B cell (primary cell): ENCODE measurements at regions of chr5 and their contacts with region 1.

Region 1: GRCh38 chr5:132490486-132491367 is at the start of gene IRF1:
- DNase-seq: peak; percentile 98
- ATAC-seq: peak; percentile 70
- H3K4me3 ChIP-seq: peak within 1 kb of the TSS; percentile 81 to 99 (median 89)
- H3K4me3 Mint-ChIP-seq: peak within 1 kb of the TSS; percentile 96
- H3K27ac ChIP-seq: peak within 1 kb of the TSS; percentile 99
- H3K27ac Mint-ChIP-seq: peak within 1 kb of the TSS; percentile 96
- H3K4me1 ChIP-seq: peaks cover 74 to 81% of the 10 kb centered on the region in 2 donors
- H3K4me1 Mint-ChIP-seq: peaks cover 76% of the 10 kb centered on the region
- H3K27me3 ChIP-seq: no peaks in the 10 kb centered on the region
- H3K27me3 Mint-ChIP-seq: no peaks in the 10 kb centered on the region
- CTCF ChIP-seq: no peak
- total RNA-seq, gene IRF1: 304 and 306 TPM in 2 replicates

Region 2: DNA sequence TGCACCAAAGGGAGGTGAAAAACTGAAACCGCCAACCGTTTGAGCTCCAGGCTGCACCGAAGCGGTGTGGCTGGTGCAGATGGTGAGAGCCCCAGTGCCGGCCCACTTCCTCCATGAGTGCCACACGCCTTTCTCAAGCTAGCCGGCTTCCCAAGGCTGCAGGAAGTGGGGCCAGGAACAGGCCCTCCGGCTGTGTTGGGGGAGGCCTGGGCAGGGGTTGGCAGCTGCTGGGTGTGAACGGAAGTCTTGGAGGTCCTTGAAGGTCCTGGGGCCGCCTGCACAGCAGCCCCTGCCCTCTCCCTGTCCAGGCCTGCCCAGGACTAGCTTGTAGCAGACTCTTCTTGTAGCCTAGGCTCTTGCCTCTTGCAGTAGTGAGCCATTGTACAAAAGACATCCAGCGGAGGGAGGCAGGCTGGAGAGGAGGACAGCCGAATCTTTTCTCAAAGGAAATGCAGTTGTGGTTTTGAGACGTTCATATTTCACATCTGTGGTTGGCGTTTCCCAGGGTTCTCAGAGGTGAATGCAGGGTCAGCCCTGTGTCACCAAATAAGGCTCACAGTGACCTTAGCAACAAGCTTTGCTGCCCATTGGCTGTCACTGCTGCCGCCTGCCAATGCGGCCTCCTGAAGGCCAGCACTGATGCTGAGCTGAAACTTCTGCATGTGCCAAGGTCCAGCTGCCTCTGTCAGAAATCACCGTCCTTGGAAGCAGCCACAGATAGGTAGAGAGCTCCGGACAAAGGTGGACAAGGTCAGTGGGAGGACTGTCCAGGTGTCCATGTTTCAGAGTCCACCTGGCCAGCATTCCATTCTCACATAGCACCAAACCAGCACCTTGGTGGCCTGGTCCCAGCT is 24.1 kb before region 1 on chr5:
- CTCF ChIA-PET with region 1: interaction called, 31 read pairs
- POLR2A ChIA-PET with region 1: interaction called, 51 read pairs
- intact Hi-C with region 1: no loop called
- DNase-seq: peak; percentile 72
- ATAC-seq: peak; percentile 61
- H3K4me3 ChIP-seq: peak overlapping the region; percentile 10 to 53 (median 35)
- H3K4me3 Mint-ChIP-seq: peak overlapping the region; percentile 62
- H3K27ac ChIP-seq: peak overlapping the region; percentile 70 to 72
- H3K27ac Mint-ChIP-seq: peak overlapping the region; percentile 77
- H3K4me1 ChIP-seq: peaks cover 71 to 83% of the 10 kb centered on the region in 2 donors
- H3K4me1 Mint-ChIP-seq: peaks cover 85% of the 10 kb centered on the region
- H3K27me3 ChIP-seq: no peaks in the 10 kb centered on the region
- H3K27me3 Mint-ChIP-seq: no peaks in the 10 kb centered on the region
- CTCF ChIP-seq: no peak

Region 3: DNA sequence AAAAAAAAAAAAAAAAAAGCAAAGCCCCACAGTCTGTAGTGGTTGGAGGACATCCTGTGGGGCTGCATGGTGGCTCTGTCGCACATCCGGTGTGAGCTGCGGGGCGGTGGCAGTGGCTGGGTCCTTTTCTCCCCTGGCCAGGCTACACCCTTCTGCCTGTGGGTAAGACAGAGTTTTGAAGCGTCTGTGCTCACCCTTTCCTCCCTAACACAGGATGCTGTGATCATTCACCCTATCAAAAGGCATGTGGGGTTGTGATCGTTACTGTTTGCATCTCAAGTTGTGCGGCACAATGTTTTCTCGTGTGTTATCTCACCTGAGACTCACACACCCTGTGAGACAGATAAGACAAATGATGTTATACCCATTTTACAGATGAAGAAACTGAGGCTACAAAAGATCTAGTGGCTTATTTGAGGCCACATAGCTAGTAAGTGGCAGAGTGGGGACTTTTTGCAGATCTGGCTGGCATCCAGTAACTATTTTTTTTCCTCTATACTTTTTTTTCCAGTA is 17.7 kb before region 1 on chr5:
- CTCF ChIA-PET with region 1: interaction called, 60 read pairs
- POLR2A ChIA-PET with region 1: interaction called, 101 read pairs
- intact Hi-C with region 1: loop called (anchors 1 kb)
- DNase-seq: peak; percentile 88
- ATAC-seq: peak; percentile 86
- H3K4me3 ChIP-seq: no peak overlapping the region
- H3K4me3 Mint-ChIP-seq: peak overlapping the region; percentile 83
- H3K27ac ChIP-seq: peak overlapping the region; percentile 81 to 93
- H3K27ac Mint-ChIP-seq: peak overlapping the region; percentile 99
- H3K4me1 ChIP-seq: peaks cover 46 to 75% of the 10 kb centered on the region in 2 donors
- H3K4me1 Mint-ChIP-seq: peaks cover 78% of the 10 kb centered on the region
- H3K27me3 ChIP-seq: no peaks in the 10 kb centered on the region
- H3K27me3 Mint-ChIP-seq: no peaks in the 10 kb centered on the region
- CTCF ChIP-seq: no peak

Region 4: DNA sequence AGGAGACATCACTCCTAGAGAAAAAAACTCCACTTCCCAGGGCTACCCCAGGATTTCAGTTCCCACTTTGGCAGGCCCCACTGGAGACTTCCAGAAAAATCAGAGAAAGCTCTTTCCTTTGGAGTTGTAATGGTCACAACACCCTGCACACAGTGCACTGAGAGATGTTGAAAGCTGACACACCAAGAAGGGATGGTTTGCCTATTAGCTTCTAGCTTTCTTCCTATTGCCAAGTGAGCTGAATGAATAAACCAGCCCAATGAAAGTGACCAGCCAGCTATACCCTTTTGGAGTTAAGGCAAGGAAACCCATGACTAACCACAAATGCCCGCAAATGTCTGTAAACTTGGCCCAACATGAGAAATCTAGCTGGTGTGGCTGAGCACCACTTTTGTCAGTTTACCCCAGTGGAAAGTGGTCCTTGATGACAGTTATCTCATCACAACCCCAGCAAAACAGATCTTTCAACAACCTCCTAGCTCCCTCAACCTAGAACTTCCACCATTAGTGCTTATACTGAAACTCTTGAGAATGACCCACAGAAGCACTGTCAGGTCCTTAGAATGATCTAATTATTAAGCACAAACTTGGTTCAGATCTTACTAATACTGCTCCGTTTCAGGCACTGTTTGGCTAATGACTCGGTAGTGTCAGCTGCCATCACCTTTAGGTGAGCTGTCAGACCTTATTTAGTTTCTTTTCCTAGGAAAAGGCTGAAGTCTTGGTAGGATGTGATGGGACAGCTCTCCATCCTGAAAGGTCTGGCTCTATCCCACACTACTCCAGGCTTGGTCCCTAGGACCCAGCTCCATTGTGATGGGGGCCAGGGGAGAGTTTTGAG is 11.4 kb before region 1 on chr5:
- CTCF ChIA-PET with region 1: interaction called, 60 read pairs
- POLR2A ChIA-PET with region 1: interaction called, 101 read pairs
- intact Hi-C with region 1: loop called (anchors 1 kb)
- DNase-seq: peak; percentile 37
- ATAC-seq: no peak
- H3K4me3 ChIP-seq: no peak overlapping the region
- H3K4me3 Mint-ChIP-seq: peak overlapping the region; percentile 58
- H3K27ac ChIP-seq: peak overlapping the region; percentile 6 to 56
- H3K27ac Mint-ChIP-seq: peak overlapping the region; percentile 99
- H3K4me1 ChIP-seq: peaks cover 30 to 64% of the 10 kb centered on the region in 2 donors
- H3K4me1 Mint-ChIP-seq: peaks cover 77% of the 10 kb centered on the region
- H3K27me3 ChIP-seq: no peaks in the 10 kb centered on the region
- H3K27me3 Mint-ChIP-seq: no peaks in the 10 kb centered on the region
- CTCF ChIP-seq: no peak